Ascending aorta (tissue), 2 donors: ENCODE measurements at regions of chr5 and their contacts with region 1.

Region 1: DNA sequence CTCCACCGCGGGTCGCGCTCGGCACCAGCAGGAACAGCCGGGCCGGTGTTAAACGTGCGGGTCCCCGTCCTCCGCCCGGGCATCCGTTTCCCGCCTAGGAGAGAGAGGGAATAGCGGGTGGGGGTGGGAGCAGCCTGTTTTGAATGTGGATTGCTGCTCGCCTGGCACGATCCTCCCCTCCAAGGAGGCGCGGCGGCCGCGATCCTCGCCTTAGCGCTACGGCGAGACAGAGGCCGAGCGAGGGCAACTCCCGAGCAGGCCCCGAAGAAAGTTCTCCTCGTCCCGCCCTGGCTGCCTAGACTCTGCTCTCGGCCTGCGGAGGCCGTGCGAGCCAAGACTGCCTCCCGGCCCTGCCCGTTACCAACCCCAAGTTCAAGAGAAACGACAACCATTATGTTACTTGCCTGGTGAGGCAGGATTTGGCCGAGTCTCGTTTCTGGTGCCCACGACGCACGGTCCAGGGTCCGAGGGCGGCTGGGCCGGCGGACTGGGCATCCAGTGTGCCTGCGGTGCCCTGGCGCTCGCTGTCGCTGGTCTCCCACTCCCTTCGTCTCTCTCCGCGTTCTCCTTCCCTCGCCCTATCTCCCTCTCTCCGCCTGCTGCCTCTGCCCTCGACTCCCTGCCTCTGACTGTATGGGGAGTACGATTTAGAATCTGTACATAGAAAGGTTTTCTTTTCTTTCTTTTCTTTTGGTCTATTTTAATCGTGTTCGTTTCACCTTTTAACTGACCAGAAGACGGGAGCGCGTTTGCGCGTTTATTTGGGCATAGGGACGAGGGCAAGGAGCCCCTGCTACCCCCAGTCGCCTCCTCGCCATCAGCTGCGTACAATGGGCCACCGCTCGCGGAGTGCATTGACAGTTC is 724 bp downstream of the NR2F1-AS1 start:
- DNase-seq: no peak
- H3K4me3 ChIP-seq: peak overlapping the region; percentile 67 to 89
- H3K27ac ChIP-seq: peak overlapping the region in 1 of 2 donors; percentile 9
- H3K4me1 ChIP-seq: peaks cover 10 to 25% of the 10 kb centered on the region in 2 donors
- H3K27me3 ChIP-seq: peaks cover 6% of the 10 kb centered on the region
- CTCF ChIP-seq: no peak

Region 2: DNA sequence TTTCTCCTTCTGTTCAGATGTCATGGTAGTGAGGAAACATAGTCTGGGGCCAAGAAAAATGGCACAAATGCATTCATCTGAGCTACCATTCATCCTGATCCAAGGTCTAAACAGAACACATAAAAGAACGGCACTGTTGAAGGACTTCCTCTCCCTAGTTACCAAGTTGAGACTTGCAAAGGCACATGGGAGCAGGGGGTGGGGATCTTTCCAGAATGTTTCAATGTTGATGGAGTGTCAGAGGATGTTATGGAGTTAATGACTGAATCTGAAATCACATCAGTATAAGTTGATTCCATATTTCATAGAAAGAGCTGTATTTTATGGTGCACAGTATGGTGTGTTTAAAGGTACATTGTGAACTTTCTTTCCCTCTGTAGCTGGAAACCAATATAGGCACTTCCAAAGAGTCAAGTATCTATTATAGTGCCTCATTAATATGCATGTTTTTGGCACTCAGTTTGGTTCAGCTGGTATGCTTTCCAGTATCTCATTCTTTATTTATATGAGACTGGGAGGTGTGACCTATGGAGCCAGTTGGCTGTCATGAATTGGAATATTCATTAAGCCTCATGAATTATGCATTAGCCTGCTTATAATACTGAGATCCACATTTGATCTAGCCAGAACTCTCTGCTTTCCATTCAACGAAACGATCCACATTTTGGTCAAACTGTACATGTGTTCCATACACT is 602.3 kb before region 1 on chr5:
- intact Hi-C with region 1: no loop called
- DNase-seq: no peak
- H3K4me3 ChIP-seq: no peak overlapping the region
- H3K27ac ChIP-seq: no peak overlapping the region
- H3K4me1 ChIP-seq: no peaks in the 10 kb centered on the region
- H3K27me3 ChIP-seq: no peaks in the 10 kb centered on the region
- CTCF ChIP-seq: no peak

Region 3: GRCh38 chr5:93800988-93801811 is 220.9 kb after region 1 on chr5:
- intact Hi-C with region 1: loop called (anchors 1 kb)
- DNase-seq: no peak
- H3K4me3 ChIP-seq: no peak overlapping the region
- H3K27ac ChIP-seq: no peak overlapping the region
- H3K4me1 ChIP-seq: no peaks in the 10 kb centered on the region
- H3K27me3 ChIP-seq: no peaks in the 10 kb centered on the region
- CTCF ChIP-seq: peak; percentile 24 to 66 (median 42)